ENCODE measurements at regions of chr7 and their contacts with region 1.

Region 1: DNA sequence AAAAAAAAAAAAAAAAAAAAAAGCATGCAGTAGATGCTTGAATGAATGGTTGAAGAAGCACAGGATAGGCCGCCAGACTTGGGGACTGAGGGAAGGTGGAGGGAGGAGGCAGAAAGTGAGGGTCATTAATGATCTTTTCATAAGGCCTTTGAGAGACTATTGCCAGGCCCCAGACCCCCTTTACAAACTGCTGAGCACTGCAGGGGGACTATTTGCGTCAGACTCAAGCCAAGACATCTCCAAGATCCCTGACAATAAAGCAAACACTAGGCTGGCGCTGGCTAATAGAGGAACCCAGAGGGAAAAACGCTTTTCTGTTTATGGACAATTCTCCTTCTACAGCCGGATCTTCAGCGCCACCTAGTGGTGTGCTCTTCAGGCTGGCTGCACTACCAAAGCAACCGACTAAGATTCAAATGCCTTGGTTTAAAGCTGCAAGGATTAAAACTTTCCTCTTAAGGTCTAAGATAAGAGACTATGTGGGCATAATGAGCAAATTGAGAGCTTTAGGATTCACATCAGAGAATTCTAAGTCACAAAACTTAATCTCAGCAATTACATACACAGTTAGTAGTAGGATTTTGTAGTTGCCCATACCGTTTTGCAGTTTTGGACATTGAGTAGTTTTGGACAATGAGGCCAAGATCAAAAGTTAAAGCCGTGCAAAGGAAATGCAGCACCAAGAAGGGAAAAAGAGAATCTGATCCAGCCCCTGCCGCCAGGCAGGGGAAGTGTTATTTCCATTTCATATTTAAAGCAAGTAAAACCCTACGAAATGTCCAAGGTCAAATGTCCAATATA is 17.9 kb upstream of the AGK start:
- DNase-seq: peak; percentile 49 to 94 (median 72)

Region 2: DNA sequence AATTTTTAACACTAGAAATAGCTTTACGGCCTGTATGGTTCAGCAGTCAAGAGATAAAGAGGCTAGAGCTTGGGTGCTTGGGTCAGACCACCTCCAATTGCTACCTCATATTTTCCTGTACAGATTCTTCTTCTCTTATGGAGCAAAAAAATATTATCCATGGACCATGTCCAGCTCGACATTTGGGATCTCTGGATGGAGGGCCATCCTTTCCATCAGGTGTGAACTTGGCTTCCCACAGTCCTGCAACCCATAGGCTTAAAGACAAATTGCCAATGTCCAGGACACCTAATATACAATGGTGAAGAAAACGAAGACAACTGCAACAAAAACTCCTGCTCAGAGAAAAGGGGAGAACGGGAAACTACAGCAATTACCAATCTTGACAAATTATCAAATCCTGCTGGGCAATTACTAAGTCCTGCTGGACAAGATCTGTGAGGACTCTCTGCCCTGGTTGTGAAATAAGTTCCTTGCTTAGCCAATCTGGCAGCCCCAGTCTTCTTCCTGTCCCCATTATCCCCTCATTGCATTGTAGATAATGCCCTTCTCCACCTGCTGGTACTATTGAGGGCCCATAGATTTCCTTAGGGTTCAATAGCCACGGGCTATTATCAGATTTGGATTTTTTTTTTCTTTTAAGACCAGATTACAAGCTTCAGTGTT is 566.7 kb before region 1 on chr7:
- intact Hi-C with region 1: no loop called
- DNase-seq: no peak

Region 3: GRCh38 chr7:141262101-141263090 is 271.0 kb before region 1 on chr7:
- intact Hi-C with region 1: loop called (anchors 2 kb)
- DNase-seq: no peak

Region 4: DNA sequence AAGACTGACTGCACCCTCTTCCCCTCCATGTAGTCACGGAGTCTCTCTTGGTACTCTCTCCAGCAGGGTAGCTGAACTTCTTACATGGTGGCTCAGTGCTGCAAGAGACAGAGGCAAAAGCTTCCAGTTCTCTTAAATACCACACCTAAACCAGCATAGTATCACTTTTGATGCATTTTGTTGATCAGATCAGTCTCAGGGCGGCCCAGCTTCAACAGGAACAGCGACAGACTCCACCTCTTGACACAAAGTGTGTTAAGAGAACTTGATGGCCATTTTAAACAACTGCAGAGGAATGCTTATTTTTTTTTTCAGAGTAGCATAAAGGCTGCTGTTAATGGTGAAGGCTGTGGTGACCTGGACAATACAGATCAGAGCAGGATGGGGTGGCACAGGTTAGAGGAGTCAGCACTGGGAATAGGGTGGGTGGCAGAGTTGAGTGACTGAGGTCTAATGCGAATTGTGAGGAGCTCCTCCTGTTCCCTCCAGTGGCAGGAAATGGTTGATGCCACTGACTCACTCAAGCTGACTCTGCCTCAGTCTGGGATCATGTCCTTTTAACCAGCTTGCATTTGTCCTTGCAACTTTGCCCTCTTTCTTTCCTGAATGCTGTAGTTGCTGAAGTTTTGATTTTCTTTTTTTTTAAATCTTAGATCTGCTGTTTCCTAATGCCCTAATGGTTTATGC is 479.6 kb after region 1 on chr7:
- intact Hi-C with region 1: no loop called
- DNase-seq: no peak

Measured in posterior cingulate gyrus (tissue), 11 donors.